Heart right ventricle (tissue), 16 donors: ENCODE measurements at regions of chr1 and their contacts with region 1.

Region 1: DNA sequence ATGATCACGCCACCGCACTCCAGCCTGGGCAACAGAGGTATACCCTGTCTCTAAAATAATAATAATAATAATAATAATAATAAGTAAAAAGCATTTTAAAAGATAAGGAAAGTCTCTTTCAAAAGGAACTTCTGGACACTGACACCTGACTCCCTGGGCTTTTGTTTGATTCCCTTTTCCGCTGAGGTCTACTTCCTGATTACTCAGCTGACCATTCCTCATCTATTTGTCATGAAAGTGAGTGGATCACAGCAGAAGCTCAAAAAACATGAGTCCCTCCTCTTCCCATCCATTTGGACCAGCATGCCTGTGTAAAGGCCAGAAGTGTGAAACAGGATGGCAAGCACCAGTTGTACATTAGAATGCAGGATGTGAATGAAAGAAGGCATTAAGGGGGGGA is 61.1 kb upstream of the FBXO28 start:
- DNase-seq: no peak
- ATAC-seq: no peak
- H3K4me3 ChIP-seq: no peak overlapping the region
- H3K27ac ChIP-seq: no peak overlapping the region
- H3K4me1 ChIP-seq: peaks cover 0 to 6% (median 0%) of the 10 kb centered on the region in 9 donors
- H3K27me3 ChIP-seq: peaks cover 0 to 6% (median 0%) of the 10 kb centered on the region in 7 donors
- CTCF ChIP-seq: no peak

Region 2: DNA sequence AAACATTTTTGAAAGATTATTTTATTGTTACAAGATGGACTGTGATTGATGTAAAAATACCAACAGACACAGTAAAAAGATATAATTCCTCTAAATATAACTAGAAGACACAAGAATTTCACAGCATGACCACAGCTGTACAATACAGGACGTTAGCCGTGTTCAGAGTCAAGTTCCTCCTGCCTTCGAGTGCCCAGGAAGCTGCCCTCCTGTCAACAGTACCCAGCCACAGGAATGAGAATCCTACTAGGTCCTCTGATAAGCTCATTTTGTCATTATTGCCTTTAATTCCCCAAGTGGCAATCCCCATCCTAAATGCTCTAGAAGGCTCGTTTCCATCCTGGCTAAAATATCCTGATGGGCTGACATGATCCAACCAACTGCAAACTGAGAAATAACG is 356.8 kb before region 1 on chr1:
- intact Hi-C with region 1: loop called in 5 of 10 experiments (anchors 2 to 10 kb)
- DNase-seq: no peak
- ATAC-seq: no peak
- H3K4me3 ChIP-seq: no peak overlapping the region
- H3K27ac ChIP-seq: no peak overlapping the region
- H3K4me1 ChIP-seq: peaks cover 0 to 18% (median 0%) of the 10 kb centered on the region in 9 donors
- H3K27me3 ChIP-seq: no peaks in the 10 kb centered on the region
- CTCF ChIP-seq: no peak

Region 3: DNA sequence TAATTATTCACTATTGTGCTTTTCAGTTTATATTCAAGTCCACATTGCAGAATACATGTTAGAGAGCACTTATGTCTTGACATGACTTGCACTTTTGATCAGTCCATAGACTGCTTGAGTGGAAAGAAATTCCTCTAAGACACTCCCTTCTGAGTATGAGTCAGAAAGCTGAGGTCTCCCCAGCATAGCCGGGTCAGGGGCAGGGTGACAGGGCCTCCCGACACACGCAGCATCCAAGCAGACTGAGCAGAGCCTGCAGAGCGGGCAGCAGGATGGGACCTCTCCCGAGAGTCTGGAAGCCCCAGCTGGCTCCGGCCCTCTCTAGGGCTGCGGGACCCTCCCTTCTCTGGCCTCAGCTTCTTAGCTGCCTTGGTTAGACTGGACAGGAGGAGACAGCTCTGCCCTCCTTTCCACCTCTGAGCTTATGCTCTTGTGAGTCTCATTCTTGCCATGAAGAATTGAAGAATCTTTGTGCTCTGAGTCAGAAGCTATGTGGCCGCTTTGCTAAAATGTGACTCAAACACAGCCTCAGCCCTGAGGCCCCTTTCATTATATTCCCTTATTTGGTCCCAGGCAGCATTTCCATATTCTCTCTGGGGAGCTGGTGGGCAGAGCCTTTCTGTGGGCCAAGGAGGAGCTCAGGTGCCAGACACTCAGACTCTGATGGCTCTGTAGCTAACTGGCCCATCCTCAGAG is 351.7 kb before region 1 on chr1:
- intact Hi-C with region 1: loop called in 5 of 10 experiments (anchors 2 to 10 kb)
- DNase-seq: no peak
- ATAC-seq: peak in 4 of 8 donors; percentile 10 to 48 (median 35)
- H3K4me3 ChIP-seq: no peak overlapping the region
- H3K27ac ChIP-seq: peak overlapping the region in 6 of 10 donors; percentile 11 to 76 (median 28)
- H3K4me1 ChIP-seq: peaks cover 4 to 43% (median 18%) of the 10 kb centered on the region in 9 donors
- H3K27me3 ChIP-seq: no peaks in the 10 kb centered on the region
- CTCF ChIP-seq: no peak

Region 4: DNA sequence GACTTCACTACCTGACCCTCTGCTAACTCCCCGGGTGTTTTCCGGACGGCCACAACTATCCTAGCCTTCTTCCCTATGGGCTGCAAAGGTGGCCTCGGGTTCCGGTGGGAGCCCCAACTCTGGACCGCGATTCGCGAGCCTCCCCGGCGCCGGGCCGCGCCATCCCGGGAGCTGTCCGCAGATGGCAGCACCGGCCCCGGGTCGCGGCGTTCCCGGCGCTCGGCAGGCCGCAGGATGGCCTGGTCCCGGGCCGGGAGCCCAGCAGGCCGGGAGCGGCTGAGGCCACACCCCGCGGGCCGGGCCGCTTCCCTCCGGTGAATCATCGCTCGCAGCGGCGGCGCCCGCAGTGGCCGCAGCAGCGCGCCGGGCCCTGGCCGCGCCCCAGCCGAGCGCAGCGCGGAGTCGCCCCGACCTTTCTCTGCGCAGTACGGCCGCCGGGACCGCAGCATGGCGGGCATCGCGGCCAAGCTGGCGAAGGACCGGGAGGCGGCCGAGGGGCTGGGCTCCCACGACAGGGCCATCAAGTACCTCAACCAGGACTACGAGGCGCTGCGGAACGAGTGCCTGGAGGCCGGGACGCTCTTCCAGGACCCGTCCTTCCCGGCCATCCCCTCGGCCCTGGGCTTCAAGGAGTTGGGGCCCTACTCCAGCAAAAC is 340.4 kb before region 1 on chr1 and contains the start of gene CAPN2:
- intact Hi-C with region 1: loop called in 1 of 10 experiments (anchors 10 kb)
- DNase-seq: peak; percentile 77 to 89
- ATAC-seq: peak; percentile 87 to 97 (median 94)
- H3K4me3 ChIP-seq: peak within 1 kb of the TSS; percentile 62 to 97 (median 90)
- H3K27ac ChIP-seq: peak within 1 kb of the TSS; percentile 89 to 99 (median 98)
- H3K4me1 ChIP-seq: peaks cover 16 to 83% (median 78%) of the 10 kb centered on the region in 9 donors
- H3K27me3 ChIP-seq: no peaks in the 10 kb centered on the region
- CTCF ChIP-seq: peak; percentile 61 to 91 (median 78)
- total RNA-seq, gene CAPN2: 65.6 to 104 (median 77.6) TPM

Region 5: DNA sequence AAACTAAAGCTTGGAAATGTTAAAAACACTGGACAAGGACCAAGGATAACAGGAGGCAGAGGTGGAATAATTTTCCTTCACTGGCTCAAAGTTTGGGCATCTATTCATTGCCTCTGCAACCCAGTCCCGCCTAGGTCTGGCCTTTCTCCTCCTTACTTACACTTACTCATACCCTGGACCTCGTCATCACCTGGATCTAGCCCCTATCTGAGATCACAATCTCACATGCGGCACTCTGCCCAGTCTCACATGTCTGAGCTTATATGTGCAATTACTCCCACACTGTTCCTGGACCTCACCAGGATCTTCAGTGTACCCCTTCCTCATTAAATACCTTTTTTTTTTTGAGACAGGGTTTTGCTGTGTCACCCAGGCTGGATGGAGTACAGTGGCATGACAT is 239.6 kb after region 1 on chr1:
- intact Hi-C with region 1: no loop called
- DNase-seq: no peak
- ATAC-seq: no peak
- H3K4me3 ChIP-seq: no peak overlapping the region
- H3K27ac ChIP-seq: no peak overlapping the region
- H3K4me1 ChIP-seq: no peaks in the 10 kb centered on the region
- H3K27me3 ChIP-seq: no peaks in the 10 kb centered on the region
- CTCF ChIP-seq: no peak